ENCODE measurements at regions of chr3 and their contacts with region 1.

Region 1: GRCh38 chr3:156187146-156187769 is 66.9 kb downstream of the KCNAB1 start:
- DNase-seq: no peak
- H3K4me3 ChIP-seq: no peak overlapping the region
- H3K27ac ChIP-seq: no peak overlapping the region
- H3K4me1 ChIP-seq: no peaks in the 10 kb centered on the region
- H3K27me3 ChIP-seq: no peaks in the 10 kb centered on the region
- CTCF ChIP-seq: no peak
- EP300 ChIP-seq: no peak
- POLR2A ChIP-seq: no peak

Region 2: GRCh38 chr3:155194973-155195957 is 992.0 kb before region 1 on chr3:
- in situ Hi-C with region 1: no loop called
- intact Hi-C with region 1: loop called (anchors 5 kb)
- DNase-seq: no peak
- H3K4me3 ChIP-seq: no peak overlapping the region
- H3K27ac ChIP-seq: no peak overlapping the region
- H3K4me1 ChIP-seq: no peaks in the 10 kb centered on the region
- H3K27me3 ChIP-seq: no peaks in the 10 kb centered on the region
- CTCF ChIP-seq: no peak
- EP300 ChIP-seq: no peak
- POLR2A ChIP-seq: no peak